Activated CD8-positive, alpha-beta T cell treated with anti-CD3 and anti-CD28 coated beads, Interleukin-2, amount 10 ng/mL, durations not matched to agents 7 days and 5 days (primary cell): ENCODE measurements at regions of chr12 and their contacts with region 1.

Region 1: GRCh38 chr12:55073043-55074022 is 52.9 kb upstream of the OR9K2 start:
- DNase-seq: peak; percentile 87
- ATAC-seq: peak; percentile 65
- H3K4me3 Mint-ChIP-seq: no peak overlapping the region
- H3K27ac Mint-ChIP-seq: no peak overlapping the region
- H3K4me1 Mint-ChIP-seq: peaks cover 7% of the 10 kb centered on the region
- H3K27me3 Mint-ChIP-seq: peaks cover 29% of the 10 kb centered on the region

Region 2: GRCh38 chr12:54723379-54724256 is 349.7 kb before region 1 on chr12:
- CTCF ChIA-PET with region 1: interaction called, 28 read pairs
- POLR2A ChIA-PET with region 1: no interaction called
- DNase-seq: peak; percentile 58
- ATAC-seq: peak; percentile 57
- H3K4me3 Mint-ChIP-seq: no peak overlapping the region
- H3K27ac Mint-ChIP-seq: no peak overlapping the region
- H3K4me1 Mint-ChIP-seq: peaks cover 10% of the 10 kb centered on the region
- H3K27me3 Mint-ChIP-seq: peaks cover 20% of the 10 kb centered on the region

Region 3: DNA sequence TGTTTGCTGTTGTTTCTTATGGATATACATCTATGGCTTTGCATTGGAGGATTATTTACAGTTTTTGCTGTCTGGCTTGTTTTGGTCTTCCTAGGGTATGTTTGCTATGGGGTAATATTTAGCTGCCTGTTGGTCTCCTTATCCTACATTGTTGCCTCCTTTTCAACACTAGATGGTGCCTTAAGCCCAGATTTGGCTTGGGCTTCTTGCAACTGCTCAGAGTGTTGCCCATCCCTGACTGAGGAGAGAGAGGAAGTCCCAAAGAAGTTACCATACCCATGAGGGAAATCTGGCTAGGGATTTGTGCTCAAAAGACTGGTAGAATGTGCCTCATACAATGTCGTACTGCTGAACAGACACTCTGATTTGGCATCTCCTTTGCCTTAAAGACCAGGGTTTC is 313.6 kb before region 1 on chr12:
- CTCF ChIA-PET with region 1: interaction called, 44 read pairs
- POLR2A ChIA-PET with region 1: no interaction called
- DNase-seq: peak; percentile 33
- ATAC-seq: no peak
- H3K4me3 Mint-ChIP-seq: no peak overlapping the region
- H3K27ac Mint-ChIP-seq: no peak overlapping the region
- H3K4me1 Mint-ChIP-seq: peaks cover 12% of the 10 kb centered on the region
- H3K27me3 Mint-ChIP-seq: no peaks in the 10 kb centered on the region

Region 4: DNA sequence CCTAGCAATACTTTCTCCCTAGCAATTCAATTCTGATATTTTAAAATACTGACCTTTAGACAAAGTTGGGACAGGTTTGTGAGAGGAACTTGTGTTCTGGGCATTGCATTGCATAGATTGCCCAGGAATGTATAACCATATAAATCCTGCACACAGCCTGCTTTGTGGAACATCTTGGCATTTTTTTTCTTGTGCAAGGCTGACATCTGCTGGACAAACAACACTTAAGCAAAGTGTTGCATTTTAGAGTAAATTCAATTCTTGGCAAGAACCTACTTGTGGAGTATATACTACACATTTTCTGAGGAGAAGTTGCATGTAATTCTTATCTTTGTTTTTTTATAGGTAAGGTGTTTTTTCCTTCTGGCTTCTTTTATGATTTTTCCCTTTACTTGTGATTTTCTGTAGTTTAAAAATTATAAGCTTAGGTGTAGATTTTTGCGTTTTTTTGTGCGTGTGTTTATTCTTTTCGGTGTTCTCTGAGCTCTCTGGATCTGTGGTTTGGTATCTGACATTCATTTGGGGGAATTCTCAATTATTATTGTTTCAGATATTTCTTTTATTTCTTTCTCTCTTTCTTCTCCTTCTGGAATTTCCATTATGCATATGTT is 115.2 kb before region 1 on chr12:
- CTCF ChIA-PET with region 1: interaction called, 71 read pairs
- POLR2A ChIA-PET with region 1: no interaction called
- DNase-seq: peak; percentile 65
- ATAC-seq: peak; percentile 43
- H3K4me3 Mint-ChIP-seq: no peak overlapping the region
- H3K27ac Mint-ChIP-seq: no peak overlapping the region
- H3K4me1 Mint-ChIP-seq: peaks cover 67% of the 10 kb centered on the region
- H3K27me3 Mint-ChIP-seq: no peaks in the 10 kb centered on the region

Region 5: DNA sequence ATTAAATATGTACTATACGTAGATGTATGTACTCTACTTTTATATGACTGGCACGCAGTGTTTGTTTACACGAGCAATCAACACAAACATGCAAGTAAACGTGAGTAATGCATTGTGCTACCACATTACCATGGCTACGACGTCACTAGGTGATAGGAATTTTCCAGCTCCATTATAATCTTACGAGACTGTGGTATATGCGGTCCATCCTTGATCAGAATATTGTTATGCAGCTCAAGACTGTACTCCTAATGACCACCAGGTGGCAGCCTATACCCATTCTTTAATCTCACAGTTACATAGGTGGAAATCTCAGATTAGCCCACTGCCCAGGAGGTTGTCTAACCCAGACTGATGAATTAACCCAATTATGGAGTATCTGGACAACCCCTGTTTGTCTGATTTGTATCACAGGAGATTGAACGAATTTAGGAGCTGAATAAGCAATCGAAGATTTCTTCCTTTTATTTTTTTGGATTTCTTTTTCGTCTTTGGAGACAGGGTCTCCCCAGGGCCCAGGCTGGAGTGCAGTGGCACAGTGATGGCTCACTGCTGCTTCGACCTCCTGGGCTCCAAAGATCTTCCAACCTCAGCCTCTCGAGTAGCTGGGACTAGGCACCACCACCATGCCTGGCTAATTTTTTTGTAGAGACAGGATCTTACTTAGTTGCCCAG is 80.0 kb before region 1 on chr12:
- CTCF ChIA-PET with region 1: interaction called, 884 read pairs
- POLR2A ChIA-PET with region 1: interaction called, 15 read pairs
- DNase-seq: peak; percentile 77
- ATAC-seq: peak; percentile 66
- H3K4me3 Mint-ChIP-seq: no peak overlapping the region
- H3K27ac Mint-ChIP-seq: no peak overlapping the region
- H3K4me1 Mint-ChIP-seq: peaks cover 36% of the 10 kb centered on the region
- H3K27me3 Mint-ChIP-seq: no peaks in the 10 kb centered on the region

Region 6: GRCh38 chr12:55049676-55050075 is 23.7 kb before region 1 on chr12:
- CTCF ChIA-PET with region 1: interaction called, 14 read pairs
- POLR2A ChIA-PET with region 1: no interaction called
- DNase-seq: no peak
- ATAC-seq: no peak
- H3K4me3 Mint-ChIP-seq: no peak overlapping the region
- H3K27ac Mint-ChIP-seq: no peak overlapping the region
- H3K4me1 Mint-ChIP-seq: no peaks in the 10 kb centered on the region
- H3K27me3 Mint-ChIP-seq: peaks cover 4% of the 10 kb centered on the region